SK-N-SH (cell line): ENCODE measurements at regions of chr1 and their contacts with region 1.

Region 1: GRCh38 chr1:29033829-29034466 is 89.8 kb downstream of the TMEM200B start:
- DNase-seq: peak; percentile 61
- H3K4me3 ChIP-seq: no peak overlapping the region
- H3K27ac ChIP-seq: no peak overlapping the region
- H3K4me1 ChIP-seq: peaks cover 0 to 2% of the 10 kb centered on the region in 2 experiments; a peak in 2 of 4 replicates
- H3K27me3 ChIP-seq: no peaks in the 10 kb centered on the region
- CTCF ChIP-seq: peak; percentile 83
- EP300 ChIP-seq: no peak
- RAD21 ChIP-seq: peak; percentile 96

Region 2: GRCh38 chr1:28893403-28894102 is 140.4 kb before region 1 on chr1:
- CTCF ChIA-PET with region 1: interaction called, 737 read pairs
- POLR2A ChIA-PET with region 1: no interaction called
- DNase-seq: peak; percentile 56
- H3K4me3 ChIP-seq: no peak overlapping the region
- H3K27ac ChIP-seq: no peak overlapping the region
- H3K4me1 ChIP-seq: peaks cover 4 to 14% of the 10 kb centered on the region in 2 experiments; a peak in 2 of 4 replicates
- H3K27me3 ChIP-seq: no peaks in the 10 kb centered on the region
- CTCF ChIP-seq: peak; percentile 43
- EP300 ChIP-seq: no peak
- RAD21 ChIP-seq: peak; percentile 35; the same call in 1 of the 2 replicates

Region 3: DNA sequence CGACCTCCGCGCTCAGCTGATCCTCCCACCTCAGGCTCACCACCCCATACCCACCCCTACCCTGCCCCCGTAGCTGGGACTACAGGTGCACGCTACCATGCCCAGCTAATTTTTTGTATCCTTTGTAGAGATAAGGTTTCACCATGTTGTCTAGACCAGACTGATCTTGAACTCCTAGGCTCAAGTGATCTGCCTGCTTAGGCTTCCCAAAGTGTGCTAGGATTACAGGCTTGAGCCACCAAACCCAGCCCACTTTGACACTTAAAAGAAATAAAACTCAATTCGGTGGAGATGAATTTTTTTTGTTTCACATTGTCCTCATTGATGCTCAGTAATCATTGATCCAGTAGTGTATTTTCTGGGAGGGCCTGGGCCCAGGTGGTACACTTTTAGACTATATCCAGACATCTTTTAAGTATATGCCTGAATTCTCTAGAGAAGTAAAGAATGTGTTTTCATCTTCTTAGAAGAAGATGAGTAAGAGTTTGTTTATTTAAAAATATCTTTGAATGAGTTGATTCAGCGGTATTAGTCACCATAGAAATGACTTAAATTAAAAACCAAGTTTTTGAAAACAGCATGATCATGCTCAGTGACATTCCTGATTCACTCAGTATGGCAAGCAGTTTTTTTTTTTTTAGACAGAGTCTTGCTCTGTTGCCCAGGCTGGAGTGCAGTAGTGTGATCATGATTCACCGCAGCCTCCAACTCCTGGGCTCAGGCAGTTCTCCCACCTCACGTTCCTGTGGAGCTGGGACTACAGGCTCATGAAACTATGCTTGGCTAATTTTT is 61.8 kb before region 1 on chr1:
- CTCF ChIA-PET with region 1: no interaction called
- POLR2A ChIA-PET with region 1: no interaction called
- DNase-seq: no peak
- H3K4me3 ChIP-seq: no peak overlapping the region
- H3K27ac ChIP-seq: peak overlapping the region in 1 of 2 experiments; percentile 90; a peak in 2 of 4 replicates
- H3K4me1 ChIP-seq: peaks cover 0 to 28% of the 10 kb centered on the region in 2 experiments; a peak in 3 of 4 replicates
- H3K27me3 ChIP-seq: no peaks in the 10 kb centered on the region
- CTCF ChIP-seq: no peak
- EP300 ChIP-seq: 0 out of 4 replicates have a peak, but pooled peaks of 1 of the 2 experiments have one; percentile 21
- RAD21 ChIP-seq: no peak

Region 4: GRCh38 chr1:29017975-29018712 is 15.8 kb before region 1 on chr1:
- CTCF ChIA-PET with region 1: interaction called, 25 read pairs
- POLR2A ChIA-PET with region 1: no interaction called
- DNase-seq: no peak
- H3K4me3 ChIP-seq: no peak overlapping the region
- H3K27ac ChIP-seq: no peak overlapping the region
- H3K4me1 ChIP-seq: no peaks in the 10 kb centered on the region
- H3K27me3 ChIP-seq: no peaks in the 10 kb centered on the region
- CTCF ChIP-seq: no peak
- EP300 ChIP-seq: no peak
- RAD21 ChIP-seq: no peak

Region 5: GRCh38 chr1:29050166-29050565 is 16.2 kb after region 1 on chr1:
- CTCF ChIA-PET with region 1: interaction called, 21 read pairs
- POLR2A ChIA-PET with region 1: no interaction called
- DNase-seq: no peak
- H3K4me3 ChIP-seq: no peak overlapping the region
- H3K27ac ChIP-seq: no peak overlapping the region
- H3K4me1 ChIP-seq: peaks cover 0 to 4% of the 10 kb centered on the region in 2 experiments; a peak in 3 of 4 replicates
- H3K27me3 ChIP-seq: no peaks in the 10 kb centered on the region
- CTCF ChIP-seq: no peak
- EP300 ChIP-seq: no peak
- RAD21 ChIP-seq: no peak

Region 6: GRCh38 chr1:29083317-29084195 is 49.6 kb after region 1 on chr1:
- CTCF ChIA-PET with region 1: interaction called, 13 read pairs
- POLR2A ChIA-PET with region 1: no interaction called
- DNase-seq: peak; percentile 50
- H3K4me3 ChIP-seq: no peak overlapping the region
- H3K27ac ChIP-seq: peak overlapping the region; percentile 30 to 93; a peak in 3 of 4 replicates
- H3K4me1 ChIP-seq: peaks cover 2 to 16% of the 10 kb centered on the region in 2 experiments; a peak in 3 of 4 replicates
- H3K27me3 ChIP-seq: no peaks in the 10 kb centered on the region
- CTCF ChIP-seq: no peak
- EP300 ChIP-seq: peak in 1 of 2 experiments; percentile 65; a peak in 2 of 4 replicates
- RAD21 ChIP-seq: no peak

Region 7: GRCh38 chr1:29197585-29197924 is 163.6 kb after region 1 on chr1:
- CTCF ChIA-PET with region 1: interaction called, 31 read pairs
- POLR2A ChIA-PET with region 1: no interaction called
- DNase-seq: peak; percentile 61
- H3K4me3 ChIP-seq: no peak overlapping the region
- H3K27ac ChIP-seq: peak overlapping the region in 1 of 2 experiments; percentile 71; a peak in 2 of 4 replicates
- H3K4me1 ChIP-seq: peaks cover 16 to 18% of the 10 kb centered on the region in 2 experiments; a peak in 2 of 4 replicates
- H3K27me3 ChIP-seq: no peaks in the 10 kb centered on the region
- CTCF ChIP-seq: peak; percentile 57
- EP300 ChIP-seq: no peak
- RAD21 ChIP-seq: peak; percentile 58

Region 8: GRCh38 chr1:29202584-29203340 is 168.8 kb after region 1 on chr1:
- CTCF ChIA-PET with region 1: interaction called, 31 read pairs
- POLR2A ChIA-PET with region 1: no interaction called
- DNase-seq: peak; percentile 90
- H3K4me3 ChIP-seq: no peak overlapping the region; a peak in 1 of 4 replicates
- H3K27ac ChIP-seq: peak overlapping the region; percentile 62 to 83
- H3K4me1 ChIP-seq: peaks cover 9 to 12% of the 10 kb centered on the region in 2 experiments; a peak in 2 of 4 replicates
- H3K27me3 ChIP-seq: no peaks in the 10 kb centered on the region
- CTCF ChIP-seq: peak; percentile 98
- EP300 ChIP-seq: peak in 1 of 2 experiments; percentile 21; a peak in 1 of 4 replicates
- RAD21 ChIP-seq: peak; percentile 97